PC-9 (cell line): ENCODE measurements at regions of chr7 and their contacts with region 1.

Region 1: DNA sequence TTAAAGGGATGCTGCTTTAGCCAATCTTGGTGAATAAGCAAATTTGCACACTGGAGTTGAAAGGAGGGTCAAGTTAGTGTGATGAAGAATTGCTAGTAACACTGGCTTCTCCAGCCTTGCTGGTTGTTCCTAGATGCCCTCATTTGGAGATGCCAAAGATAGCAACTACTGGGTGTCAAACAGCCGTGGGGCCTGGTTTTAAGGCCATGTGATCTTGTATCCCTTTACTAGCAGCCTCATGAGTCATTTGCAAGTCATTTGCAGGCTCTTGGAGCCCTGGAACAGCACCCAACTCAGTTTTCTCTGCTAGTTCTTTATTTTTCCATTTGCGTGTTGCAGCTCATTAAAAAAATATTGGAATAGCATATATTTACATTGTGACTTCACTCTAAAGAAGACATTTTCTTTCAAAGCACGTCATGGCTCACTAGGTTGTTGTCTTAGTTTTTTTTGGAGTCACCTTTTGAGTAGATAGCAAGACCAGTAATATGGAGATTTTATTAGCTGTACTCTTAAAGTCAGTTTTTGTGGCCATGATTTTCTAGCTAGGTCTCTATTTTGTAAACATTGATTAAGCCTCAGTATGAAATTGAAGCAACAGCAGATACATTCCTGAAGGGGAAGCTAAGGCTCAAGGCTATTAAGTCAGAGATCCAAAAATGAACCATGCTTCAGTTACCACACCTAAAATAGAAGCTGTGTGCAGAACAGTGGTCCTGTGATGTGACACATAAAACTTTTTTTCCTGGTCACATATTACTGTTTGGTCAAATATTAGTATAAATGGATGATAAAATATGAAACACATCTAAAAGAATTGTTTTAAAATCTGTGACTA is 1.3 kb downstream of the LSMEM1 start:
- DNase-seq: peak; percentile 83 to 93
- H3K4me3 ChIP-seq: no peak overlapping the region
- H3K27ac ChIP-seq: peak overlapping the region; percentile 48
- H3K4me1 ChIP-seq: peaks cover 35% of the 10 kb centered on the region
- H3K27me3 ChIP-seq: no peaks in the 10 kb centered on the region
- CTCF ChIP-seq: no peak

Region 2: DNA sequence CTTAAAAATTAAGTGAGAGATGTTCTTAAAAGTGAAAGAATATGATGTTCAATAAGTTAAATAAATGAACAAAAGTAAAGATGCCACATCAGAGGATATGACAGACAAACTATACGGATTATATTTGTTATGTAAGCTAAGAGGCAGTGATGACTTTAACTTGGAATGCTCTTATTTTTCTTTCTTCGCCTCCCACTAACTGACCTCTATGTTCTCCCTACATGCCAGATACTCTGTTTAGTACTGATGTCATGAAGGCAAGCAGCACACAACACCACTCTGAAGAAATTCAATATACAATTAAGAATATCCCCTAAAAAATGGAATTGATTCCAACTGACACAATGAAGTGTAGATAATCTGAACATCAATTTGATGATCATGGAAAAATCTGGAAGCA is 499.2 kb before region 1 on chr7:
- CTCF ChIA-PET with region 1: no interaction called
- POLR2A ChIA-PET with region 1: no interaction called
- intact Hi-C with region 1: loop called (anchors 5 kb)
- DNase-seq: no peak
- H3K4me3 ChIP-seq: no peak overlapping the region
- H3K27ac ChIP-seq: no peak overlapping the region
- H3K4me1 ChIP-seq: peaks cover 27% of the 10 kb centered on the region
- H3K27me3 ChIP-seq: no peaks in the 10 kb centered on the region
- CTCF ChIP-seq: no peak

Region 3: DNA sequence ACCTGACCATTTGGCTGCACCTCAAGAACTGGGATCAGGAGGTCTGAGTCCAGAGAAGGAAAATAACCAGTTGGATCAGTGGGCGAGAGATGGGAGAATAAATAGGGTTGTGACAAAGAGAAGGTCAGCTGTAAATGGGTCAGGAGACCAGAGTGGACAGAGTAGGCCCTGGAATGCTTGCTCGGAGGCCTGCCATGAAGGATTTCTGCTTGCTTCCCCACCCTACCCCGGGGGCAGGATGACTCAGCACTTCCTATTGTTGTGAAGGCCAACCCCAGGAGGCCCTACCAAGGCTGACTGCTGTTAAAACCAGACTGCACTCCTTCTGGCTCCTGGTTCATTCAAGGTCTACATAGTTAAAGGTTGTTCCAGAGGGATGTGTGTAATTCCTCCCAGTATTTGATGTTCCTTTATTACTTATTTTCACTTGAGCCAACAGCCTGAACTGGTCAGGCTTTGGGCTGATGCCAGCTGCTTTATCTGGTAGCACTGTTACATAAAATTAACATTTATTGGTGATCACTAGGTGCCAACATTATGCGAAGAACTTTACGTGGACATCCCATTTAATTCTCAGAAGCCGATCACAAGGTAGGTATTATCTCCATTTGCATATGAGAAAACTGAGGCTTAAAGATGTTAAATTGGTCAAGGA is 59.1 kb before region 1 on chr7:
- CTCF ChIA-PET with region 1: no interaction called
- POLR2A ChIA-PET with region 1: no interaction called
- intact Hi-C with region 1: loop called (anchors 1 kb)
- DNase-seq: peak; percentile 97 to 100
- H3K4me3 ChIP-seq: peak overlapping the region; percentile 11; the same call in 1 of the 2 replicates
- H3K27ac ChIP-seq: peak overlapping the region; percentile 75
- H3K4me1 ChIP-seq: peaks cover 33% of the 10 kb centered on the region
- H3K27me3 ChIP-seq: no peaks in the 10 kb centered on the region
- CTCF ChIP-seq: no peak